H1 (cell line): ENCODE measurements at regions of chr10 and their contacts with region 1.

Region 1: DNA sequence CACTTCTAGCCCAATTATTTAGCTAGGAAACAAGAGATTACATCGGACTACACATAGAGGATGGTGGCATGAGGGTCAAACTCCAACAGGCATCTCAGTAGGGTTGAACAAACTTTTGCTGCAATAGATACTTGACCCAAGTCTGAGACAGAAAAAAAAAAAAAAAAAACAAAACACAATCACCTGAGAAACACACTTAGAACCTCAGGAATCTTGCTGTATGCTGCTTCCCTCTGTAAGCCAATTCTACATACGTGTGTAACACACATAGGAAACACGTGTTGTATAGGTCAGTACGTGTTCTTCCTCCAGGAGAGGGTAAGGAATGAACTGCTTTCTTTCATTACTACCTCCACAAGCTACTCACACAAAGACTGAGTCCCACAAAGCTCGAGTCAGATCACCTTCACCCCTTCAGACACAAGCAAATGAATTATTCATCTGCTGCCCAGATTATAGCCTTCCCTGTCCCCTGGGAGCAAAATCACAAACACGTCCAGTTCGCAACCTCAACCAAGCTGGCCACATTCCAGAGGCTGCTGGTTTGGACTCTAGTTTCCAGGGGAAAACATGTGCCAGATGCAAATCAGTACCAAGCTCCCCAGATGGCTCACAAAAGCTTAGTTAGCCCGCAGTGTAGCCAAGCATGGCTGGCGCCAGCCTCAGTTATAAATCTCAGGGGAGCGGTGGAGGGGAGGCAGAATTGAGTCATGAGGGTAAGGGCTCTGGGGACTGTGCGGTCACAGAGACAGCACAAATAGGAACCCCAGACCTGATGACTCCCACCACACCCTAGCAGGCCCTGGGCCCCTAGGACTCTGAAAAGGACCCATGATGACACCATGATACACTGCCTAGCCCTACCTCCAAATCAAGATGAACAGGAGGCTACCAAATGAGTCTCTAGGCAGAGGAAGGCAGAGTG is 15.1 kb downstream of the PSAP start:
- DNase-seq: no peak
- H3K4me3 ChIP-seq: no peak overlapping the region
- H3K27ac ChIP-seq: peak overlapping the region; percentile 43; the same call in 1 of the 2 replicates
- H3K4me1 ChIP-seq: peaks cover 10 to 27% (median 11%) of the 10 kb centered on the region in 4 experiments
- H3K27me3 ChIP-seq: no peaks in the 10 kb centered on the region
- CTCF ChIP-seq: no peak
- EP300 ChIP-seq: no peak
- POLR2A ChIP-seq: no peak
- RAD21 ChIP-seq: no peak

Region 2: DNA sequence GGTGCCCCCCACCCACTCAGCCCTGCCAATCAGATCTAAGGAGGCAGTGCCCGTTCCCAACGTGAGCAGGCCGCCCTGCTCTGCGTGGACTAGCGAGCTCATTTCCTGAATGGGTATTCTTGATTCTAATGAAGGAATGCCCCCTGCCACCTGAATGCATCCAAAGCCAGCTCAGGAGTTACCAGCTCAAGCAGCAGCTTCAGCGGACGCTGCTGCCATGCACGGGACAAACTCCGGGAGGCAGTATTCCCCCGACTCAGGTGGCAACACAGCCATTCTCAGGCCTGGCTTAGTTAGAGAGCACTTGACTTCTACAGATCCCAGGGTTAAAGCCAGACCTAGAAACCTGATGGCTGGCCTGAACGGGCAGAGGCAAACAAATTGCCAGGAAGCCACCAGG is 10.7 kb before region 1 on chr10:
- CTCF ChIA-PET with region 1: interaction called, 10 read pairs
- POLR2A ChIA-PET with region 1: interaction called, 5 read pairs
- DNase-seq: no peak
- H3K4me3 ChIP-seq: no peak overlapping the region
- H3K27ac ChIP-seq: no peak overlapping the region
- H3K4me1 ChIP-seq: peaks cover 0 to 2% (median 0%) of the 10 kb centered on the region in 4 experiments; a peak in 1 of 7 replicates
- H3K27me3 ChIP-seq: no peaks in the 10 kb centered on the region
- CTCF ChIP-seq: peak; percentile 13 to 41 (median 31); a peak in 2 of 4 replicates
- EP300 ChIP-seq: no peak
- POLR2A ChIP-seq: no peak
- RAD21 ChIP-seq: peak; percentile 11 to 28; a peak in 2 of 4 replicates

Region 3: DNA sequence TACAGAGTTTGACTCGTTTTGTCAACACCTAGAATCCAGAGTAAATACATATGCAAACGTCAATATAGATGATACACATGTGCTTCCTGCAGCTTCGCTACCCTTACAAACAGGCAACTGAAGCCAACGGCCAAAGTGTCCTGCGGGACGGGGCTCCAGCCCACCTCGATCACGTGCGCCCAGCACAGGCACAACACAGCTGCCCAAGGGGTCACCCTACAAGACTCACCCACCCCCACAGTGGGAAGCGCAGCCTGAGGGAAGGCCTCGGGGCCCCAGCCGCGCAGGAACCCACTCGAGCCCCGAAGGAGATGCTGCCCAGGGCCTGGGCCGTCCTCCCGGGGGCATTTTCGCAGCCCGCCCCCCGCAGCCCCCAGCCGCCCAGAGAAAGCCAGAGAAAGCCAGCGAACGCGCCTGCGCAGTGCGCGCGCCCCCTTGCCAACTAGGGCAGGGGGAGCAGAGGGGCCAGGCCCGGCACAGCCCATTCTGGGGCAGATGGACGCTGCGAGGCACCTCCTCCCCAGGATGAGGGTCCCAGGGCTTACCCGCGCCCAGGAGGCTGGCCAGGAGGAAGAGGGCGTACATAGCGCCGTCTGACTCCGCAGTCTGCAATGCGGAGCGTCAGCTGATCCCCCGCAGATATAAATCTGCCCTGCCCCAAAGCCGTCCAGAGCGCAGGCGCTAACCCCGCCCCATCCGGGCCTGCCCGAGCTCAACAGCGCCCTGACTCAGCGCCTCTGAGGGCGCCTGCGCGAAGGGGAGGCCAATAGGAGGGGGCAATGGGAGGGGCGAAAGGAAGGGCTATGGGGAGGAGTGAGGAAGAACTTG is 14.9 kb after region 1 on chr10 and contains the start of gene PSAP:
- CTCF ChIA-PET with region 1: interaction called, 7 read pairs
- POLR2A ChIA-PET with region 1: interaction called, 20 read pairs
- DNase-seq: peak; percentile 93 to 97
- H3K4me3 ChIP-seq: peak within 1 kb of the TSS; percentile 78 to 96 (median 90)
- H3K27ac ChIP-seq: peak within 1 kb of the TSS; percentile 83
- H3K4me1 ChIP-seq: peaks cover 5 to 9% (median 6%) of the 10 kb centered on the region in 4 experiments; a peak in 4 of 7 replicates
- H3K27me3 ChIP-seq: no peaks in the 10 kb centered on the region
- CTCF ChIP-seq: no peak
- EP300 ChIP-seq: no peak
- POLR2A ChIP-seq: peak; percentile 85 to 96
- RAD21 ChIP-seq: no peak
- total RNA-seq, gene PSAP: 386 and 388 TPM in 2 replicates

Region 4: GRCh38 chr10:71860243-71861029 is 24.5 kb after region 1 on chr10:
- CTCF ChIA-PET with region 1: interaction called, 14 read pairs
- POLR2A ChIA-PET with region 1: interaction called, 5 read pairs
- DNase-seq: peak; percentile 56 to 73
- H3K4me3 ChIP-seq: no peak overlapping the region
- H3K27ac ChIP-seq: no peak overlapping the region; the same call in 1 of the 2 replicates
- H3K4me1 ChIP-seq: peaks cover 3 to 14% (median 6%) of the 10 kb centered on the region in 4 experiments; a peak in 4 of 7 replicates
- H3K27me3 ChIP-seq: no peaks in the 10 kb centered on the region
- CTCF ChIP-seq: no peak
- EP300 ChIP-seq: no peak; a peak in 1 of 3 replicates
- POLR2A ChIP-seq: no peak
- RAD21 ChIP-seq: no peak